ENCODE measurements at regions of chr19 and their contacts with region 1.

Region 1: DNA sequence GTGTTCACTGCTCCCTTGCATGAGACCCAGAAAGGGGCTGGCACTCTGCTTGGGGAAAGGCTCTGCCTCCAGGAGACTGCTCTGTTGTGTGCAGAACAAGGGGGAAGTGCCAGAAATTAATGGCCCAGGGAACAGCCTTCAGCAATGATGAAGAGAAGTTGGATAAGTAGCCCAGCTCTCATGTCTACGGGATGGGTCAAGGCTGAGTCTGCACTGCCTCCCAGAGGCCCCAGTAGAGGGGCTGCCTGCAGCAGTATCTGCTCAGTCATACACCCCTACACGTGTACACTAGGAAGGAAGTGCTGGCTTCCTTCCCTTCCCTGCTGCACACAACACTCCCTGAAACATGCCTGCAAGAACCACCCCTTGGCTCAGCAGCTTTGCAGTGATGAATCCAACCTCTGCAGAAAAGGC is 54.6 kb upstream of the URI1 start:
- DNase-seq: no peak
- H3K4me3 ChIP-seq: no peak overlapping the region
- H3K27ac ChIP-seq: no peak overlapping the region
- H3K4me1 ChIP-seq: no peaks in the 10 kb centered on the region
- H3K27me3 ChIP-seq: peaks cover 38% of the 10 kb centered on the region
- CTCF ChIP-seq: no peak

Region 2: DNA sequence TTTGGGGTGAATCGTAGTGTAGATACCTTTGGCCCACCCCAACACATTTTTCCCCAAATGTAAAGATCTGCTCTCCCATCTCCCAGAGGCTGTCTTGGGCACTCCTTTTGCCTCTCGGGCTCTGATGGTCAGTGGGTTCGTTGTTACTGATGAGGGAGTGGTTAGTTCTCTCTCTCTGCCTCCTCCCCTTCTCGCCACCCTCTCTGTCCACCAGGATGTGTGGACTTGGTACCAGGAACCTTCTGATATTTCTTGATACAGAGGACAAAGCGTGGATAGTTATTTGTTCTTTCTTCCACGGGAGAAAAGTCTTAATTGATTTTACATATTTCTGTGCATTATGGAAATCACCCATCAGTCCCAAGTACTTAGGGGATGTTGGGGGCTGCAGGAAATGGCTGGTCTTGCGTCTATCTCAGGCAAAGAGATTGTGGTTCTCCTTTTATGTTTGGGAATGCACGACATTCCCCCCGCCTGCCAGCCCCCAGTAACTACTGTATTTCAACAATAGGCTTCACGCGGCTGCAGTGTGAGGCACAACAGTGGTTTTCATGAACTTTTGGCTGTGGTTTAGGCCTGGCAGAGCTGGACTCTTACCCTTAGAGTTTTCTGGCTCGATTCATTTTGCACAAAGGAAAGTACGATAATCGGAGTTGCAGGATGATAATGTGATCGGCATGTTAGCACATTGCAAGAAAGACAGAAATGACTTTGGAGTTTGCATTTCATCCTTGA is 405.8 kb after region 1 on chr19:
- CTCF ChIA-PET with region 1: no interaction called
- POLR2A ChIA-PET with region 1: no interaction called
- intact Hi-C with region 1: loop called (anchors 10 kb)
- DNase-seq: no peak
- H3K4me3 ChIP-seq: no peak overlapping the region
- H3K27ac ChIP-seq: no peak overlapping the region
- H3K4me1 ChIP-seq: no peaks in the 10 kb centered on the region
- H3K27me3 ChIP-seq: peaks cover 42% of the 10 kb centered on the region
- CTCF ChIP-seq: no peak

Measured in PC-9 (cell line).